ENCODE measurements at regions of chr17 and their contacts with region 1.

Region 1: GRCh38 chr17:71548540-71549190 is 572.2 kb upstream of the SOX9 start:
- DNase-seq: no peak
- ATAC-seq: no peak
- H3K4me3 ChIP-seq: no peak overlapping the region
- H3K27ac ChIP-seq: no peak overlapping the region
- H3K4me1 ChIP-seq: no peaks in the 10 kb centered on the region
- H3K27me3 ChIP-seq: peaks cover 0 to 4% (median 0%) of the 10 kb centered on the region in 7 donors
- CTCF ChIP-seq: no peak

Region 2: DNA sequence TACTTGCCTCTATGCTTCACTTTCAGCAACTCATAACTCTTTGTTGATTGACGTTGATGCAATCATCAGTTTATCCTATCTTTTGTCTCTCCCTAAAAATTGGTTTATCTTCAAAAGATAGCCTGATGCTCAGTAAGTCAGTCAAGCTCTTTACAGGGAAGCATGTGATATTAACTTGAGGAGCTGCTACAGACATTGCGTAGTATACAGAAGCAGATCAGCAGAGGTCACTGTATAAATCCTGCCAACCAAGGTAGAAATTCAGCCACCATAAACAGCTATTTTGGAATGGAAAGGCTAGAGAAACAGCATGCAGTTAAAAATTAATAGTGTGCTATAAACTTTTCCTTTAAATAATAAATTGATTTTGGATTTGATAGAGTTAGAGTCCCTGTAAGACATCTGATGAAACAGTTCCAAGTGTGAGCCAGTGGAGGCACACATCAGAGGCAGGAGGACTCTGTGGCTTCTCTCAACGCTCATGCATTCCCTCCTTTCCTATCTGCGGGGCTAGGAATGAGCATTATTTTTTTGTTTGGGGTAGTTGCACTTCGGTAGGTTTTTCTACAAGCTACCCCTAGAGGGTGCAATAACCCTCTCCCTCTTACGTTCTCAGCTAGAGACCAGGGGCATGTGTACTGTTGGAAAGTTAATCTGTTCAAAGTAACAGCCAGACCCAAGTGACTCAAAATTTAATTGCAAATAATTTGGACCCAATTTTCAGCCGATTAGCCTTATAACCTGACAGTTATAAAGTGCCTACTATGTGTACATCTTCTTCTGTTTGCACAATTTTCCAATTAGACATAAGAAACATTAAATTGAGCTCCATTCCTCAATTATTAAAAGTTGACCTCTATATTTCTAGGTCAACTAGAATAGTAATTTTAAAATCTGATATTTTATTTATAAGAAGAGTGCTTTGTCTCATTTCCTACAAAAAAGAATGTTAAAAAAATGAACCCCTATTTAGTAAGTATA is 75.6 kb before region 1 on chr17:
- intact Hi-C with region 1: no loop called
- DNase-seq: peak in 1 of 2 donors; percentile 6
- ATAC-seq: peak in 3 of 8 donors; percentile 34 to 78 (median 35)
- H3K4me3 ChIP-seq: no peak overlapping the region
- H3K27ac ChIP-seq: no peak overlapping the region
- H3K4me1 ChIP-seq: no peaks in the 10 kb centered on the region
- H3K27me3 ChIP-seq: peaks cover 0 to 13% (median 0%) of the 10 kb centered on the region in 7 donors
- CTCF ChIP-seq: peak; percentile 30 to 65 (median 56)

Region 3: GRCh38 chr17:71587792-71588191 is 39.1 kb after region 1 on chr17:
- intact Hi-C with region 1: no loop called
- DNase-seq: no peak
- ATAC-seq: no peak
- H3K4me3 ChIP-seq: no peak overlapping the region
- H3K27ac ChIP-seq: no peak overlapping the region
- H3K4me1 ChIP-seq: no peaks in the 10 kb centered on the region
- H3K27me3 ChIP-seq: no peaks in the 10 kb centered on the region
- CTCF ChIP-seq: no peak

Region 4: GRCh38 chr17:71600137-71600789 is 51.6 kb after region 1 on chr17:
- intact Hi-C with region 1: loop called in 1 of 10 experiments (anchors 10 kb)
- DNase-seq: no peak
- ATAC-seq: no peak
- H3K4me3 ChIP-seq: no peak overlapping the region
- H3K27ac ChIP-seq: no peak overlapping the region
- H3K4me1 ChIP-seq: no peaks in the 10 kb centered on the region
- H3K27me3 ChIP-seq: peaks cover 0 to 3% (median 0%) of the 10 kb centered on the region in 7 donors
- CTCF ChIP-seq: no peak

Measured in heart right ventricle (tissue), 16 donors.